GM10248 (cell line): ENCODE measurements at regions of chr9 and their contacts with region 1.

Region 1: DNA sequence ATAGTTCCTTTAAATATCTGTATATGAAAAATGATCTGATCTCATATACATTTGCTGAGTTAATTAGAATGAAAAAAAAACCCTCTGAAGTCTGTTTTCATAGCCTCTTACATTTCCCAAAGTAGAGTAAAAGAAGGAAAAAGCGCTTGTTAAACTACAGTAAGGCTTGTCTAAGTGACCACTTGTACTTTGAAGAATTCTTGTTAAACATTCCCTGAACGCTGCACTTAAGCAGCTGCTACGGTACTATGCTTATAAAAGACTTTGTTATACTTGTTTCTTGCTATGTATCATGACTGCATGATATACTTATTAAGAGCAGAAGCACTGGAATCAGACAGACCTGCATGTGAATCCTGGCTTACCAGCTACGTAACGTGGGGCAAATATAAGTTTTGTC is 81.7 kb upstream of the MTAP start:
- DNase-seq: no peak
- CTCF ChIP-seq: no peak

Region 2: GRCh38 chr9:21709464-21710058 is 11.2 kb before region 1 on chr9:
- CTCF ChIA-PET with region 1: interaction called, 19 read pairs
- POLR2A ChIA-PET with region 1: no interaction called
- DNase-seq: peak; percentile 17
- CTCF ChIP-seq: peak; percentile 76

Region 3: GRCh38 chr9:21730899-21731298 is 10.1 kb after region 1 on chr9:
- CTCF ChIA-PET with region 1: no interaction called
- POLR2A ChIA-PET with region 1: no interaction called
- DNase-seq: no peak
- CTCF ChIP-seq: no peak